ENCODE measurements at regions of chr9 and their contacts with region 1.

Region 1: DNA sequence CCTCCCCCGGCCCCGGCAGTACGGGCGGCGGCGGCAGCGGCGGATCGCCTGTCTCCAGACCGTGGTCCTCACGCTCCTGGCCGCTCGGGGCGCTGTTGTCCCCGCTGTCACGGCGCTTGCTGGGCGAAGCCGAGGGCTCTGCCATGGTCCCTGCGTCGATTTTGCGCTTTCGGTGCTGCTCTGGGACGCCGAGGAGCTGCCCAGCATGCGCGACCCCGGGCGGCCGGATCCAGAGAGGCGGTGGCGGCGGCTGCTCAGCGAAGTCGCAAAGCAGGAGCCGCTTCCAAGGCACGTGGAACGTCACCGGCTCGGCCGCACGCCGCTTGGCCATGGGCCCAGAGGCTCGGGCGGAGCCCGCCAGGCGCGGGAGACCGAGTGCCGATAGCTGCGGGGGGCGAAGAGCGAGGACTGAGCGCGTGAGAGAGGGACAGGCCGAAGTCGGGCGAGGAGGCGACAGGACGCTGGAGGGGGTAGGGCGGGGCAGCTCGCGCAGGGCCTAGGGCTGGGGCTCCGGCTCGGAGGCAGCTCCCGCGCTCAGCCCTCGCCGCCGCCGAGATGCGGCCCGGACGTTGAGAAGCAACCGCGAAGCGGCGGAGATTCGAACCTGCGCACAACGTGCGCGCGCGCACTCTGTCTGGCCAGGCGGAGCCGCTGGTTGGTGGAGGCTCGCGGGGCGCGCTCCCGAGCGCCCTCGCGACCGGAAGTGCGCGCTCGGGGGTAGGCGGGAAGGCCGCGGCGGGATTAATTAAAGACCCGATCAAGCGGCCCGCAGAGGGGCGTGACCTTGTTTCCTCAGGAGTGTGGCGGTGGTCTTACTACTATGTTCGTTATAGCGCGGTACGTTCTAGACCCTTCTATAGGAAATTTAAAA is at the start of gene C9orf40:
- DNase-seq: peak; percentile 88 to 90 (median 89)
- H3K4me3 ChIP-seq: peak within 1 kb of the TSS; percentile 66 to 96
- H3K4me3 Mint-ChIP-seq: peak within 1 kb of the TSS; percentile 96 to 100 (median 98)
- H3K27ac ChIP-seq: peak within 1 kb of the TSS; percentile 82
- H3K27ac Mint-ChIP-seq: peak within 1 kb of the TSS; percentile 93 to 98 (median 97)
- H3K4me1 ChIP-seq: peaks cover 23% of the 10 kb centered on the region
- H3K4me1 Mint-ChIP-seq: peaks cover 9 to 31% (median 23%) of the 10 kb centered on the region in 4 donors
- H3K27me3 ChIP-seq: no peaks in the 10 kb centered on the region
- H3K27me3 Mint-ChIP-seq: no peaks in the 10 kb centered on the region
- total RNA-seq, gene C9orf40: 7.1 to 7.4 TPM

Region 2: GRCh38 chr9:74887041-74887980 is 65.2 kb before region 1 on chr9 and contains the start of gene TRPM6:
- CTCF ChIA-PET with region 1: no interaction called
- POLR2A ChIA-PET with region 1: no interaction called
- intact Hi-C with region 1: loop called (anchors 10 kb)
- DNase-seq: peak in 4 of 5 donors; percentile 7 to 28 (median 17)
- H3K4me3 ChIP-seq: peak within 1 kb of the TSS; percentile 3 to 25
- H3K4me3 Mint-ChIP-seq: peak within 1 kb of the TSS; percentile 78 to 94 (median 84)
- H3K27ac ChIP-seq: no peak within 1 kb of the TSS
- H3K27ac Mint-ChIP-seq: peak within 1 kb of the TSS in 1 of 7 donors; percentile 19
- H3K4me1 ChIP-seq: peaks cover 6% of the 10 kb centered on the region
- H3K4me1 Mint-ChIP-seq: peaks cover 6 to 18% (median 16%) of the 10 kb centered on the region in 4 donors
- H3K27me3 ChIP-seq: peaks cover 15% of the 10 kb centered on the region
- H3K27me3 Mint-ChIP-seq: peaks cover 22 to 35% of the 10 kb centered on the region in 2 donors
- total RNA-seq, gene TRPM6: not detected

Region 3: GRCh38 chr9:74940600-74940999 is 11.9 kb before region 1 on chr9:
- CTCF ChIA-PET with region 1: interaction called, 14 read pairs
- POLR2A ChIA-PET with region 1: interaction called, 7 read pairs
- intact Hi-C with region 1: no loop called
- DNase-seq: no peak
- H3K4me3 ChIP-seq: no peak overlapping the region
- H3K4me3 Mint-ChIP-seq: no peak overlapping the region
- H3K27ac ChIP-seq: no peak overlapping the region
- H3K27ac Mint-ChIP-seq: no peak overlapping the region
- H3K4me1 ChIP-seq: no peaks in the 10 kb centered on the region
- H3K4me1 Mint-ChIP-seq: peaks cover 0 to 9% (median 7%) of the 10 kb centered on the region in 4 donors
- H3K27me3 ChIP-seq: no peaks in the 10 kb centered on the region
- H3K27me3 Mint-ChIP-seq: no peaks in the 10 kb centered on the region

Region 4: DNA sequence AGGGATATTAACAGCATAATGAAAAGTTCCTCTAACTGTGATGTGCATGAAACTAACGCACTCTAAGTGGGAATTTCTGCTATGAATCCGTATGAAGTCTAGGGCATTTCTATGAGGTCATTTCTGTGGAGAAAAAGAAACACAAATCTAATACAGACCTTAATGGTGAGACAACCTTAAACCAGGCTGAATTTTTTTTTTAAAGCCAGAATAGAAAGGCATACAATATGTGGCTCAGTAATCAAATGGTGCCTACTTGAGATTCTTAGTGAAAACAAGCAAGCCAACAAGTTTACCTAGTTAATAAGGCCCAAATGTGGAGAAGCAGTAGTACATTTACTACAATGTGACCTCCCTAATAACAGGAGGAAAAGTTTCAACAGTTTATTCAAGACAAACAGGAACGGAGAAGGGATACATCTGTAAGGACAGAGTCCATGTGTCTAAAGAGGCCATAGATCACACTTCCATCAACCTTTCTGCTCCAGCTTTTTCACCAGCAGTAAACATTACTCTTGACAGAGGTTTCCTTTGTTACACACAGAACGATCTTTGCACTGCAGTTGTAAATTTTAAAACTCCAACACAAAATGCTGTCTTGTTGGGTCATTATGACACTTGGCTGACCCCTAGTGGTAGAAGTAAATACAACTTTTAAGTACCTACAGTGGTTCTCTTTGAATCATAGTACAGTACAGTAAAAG is 49.4 kb after region 1 on chr9:
- CTCF ChIA-PET with region 1: interaction called, 18 read pairs
- POLR2A ChIA-PET with region 1: no interaction called
- intact Hi-C with region 1: loop called (anchors 2 kb)
- DNase-seq: peak in 4 of 5 donors; percentile 65 to 67 (median 66)
- H3K4me3 ChIP-seq: no peak overlapping the region
- H3K4me3 Mint-ChIP-seq: no peak overlapping the region
- H3K27ac ChIP-seq: no peak overlapping the region
- H3K27ac Mint-ChIP-seq: no peak overlapping the region
- H3K4me1 ChIP-seq: no peaks in the 10 kb centered on the region
- H3K4me1 Mint-ChIP-seq: peaks cover 0 to 7% (median 6%) of the 10 kb centered on the region in 4 donors
- H3K27me3 ChIP-seq: no peaks in the 10 kb centered on the region
- H3K27me3 Mint-ChIP-seq: no peaks in the 10 kb centered on the region

Region 5: DNA sequence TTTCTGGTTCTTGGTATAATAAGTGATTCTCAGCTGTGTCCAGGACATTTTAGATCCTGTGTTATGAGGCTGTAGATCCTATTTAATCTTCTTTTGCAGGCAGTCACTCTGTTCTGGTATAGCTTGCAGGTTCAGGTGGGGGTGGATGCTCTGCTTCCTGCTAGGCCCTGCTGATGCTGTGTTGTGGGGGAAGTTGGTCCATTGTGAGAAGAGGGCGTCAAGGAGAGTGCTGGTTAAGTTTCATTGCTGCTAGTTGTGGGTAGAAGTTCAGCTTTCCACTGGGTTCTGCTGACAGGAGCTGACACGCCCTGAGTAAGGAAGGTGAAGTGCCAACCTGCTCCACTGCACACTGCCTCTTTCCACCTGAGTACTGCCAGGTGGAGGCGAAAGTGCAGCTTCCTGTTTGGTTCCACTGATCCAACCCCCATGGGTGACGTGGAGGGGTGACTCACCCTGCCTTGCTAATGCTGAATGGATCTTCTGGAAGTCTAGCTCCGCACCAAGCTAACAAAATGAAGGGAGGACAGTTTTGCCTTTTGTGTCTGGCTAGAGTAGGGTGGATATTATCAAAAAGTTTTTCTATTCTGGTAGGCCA is 119.1 kb after region 1 on chr9:
- CTCF ChIA-PET with region 1: interaction called, 17 read pairs
- POLR2A ChIA-PET with region 1: interaction called, 3 read pairs
- intact Hi-C with region 1: loop called (anchors 2 kb)
- DNase-seq: peak; percentile 35 to 88 (median 42)
- H3K4me3 ChIP-seq: no peak overlapping the region
- H3K4me3 Mint-ChIP-seq: peak overlapping the region in 1 of 8 donors; percentile 23
- H3K27ac ChIP-seq: no peak overlapping the region
- H3K27ac Mint-ChIP-seq: peak overlapping the region; percentile 29 to 87 (median 57)
- H3K4me1 ChIP-seq: peaks cover 13% of the 10 kb centered on the region
- H3K4me1 Mint-ChIP-seq: peaks cover 12 to 30% (median 15%) of the 10 kb centered on the region in 4 donors
- H3K27me3 ChIP-seq: no peaks in the 10 kb centered on the region
- H3K27me3 Mint-ChIP-seq: no peaks in the 10 kb centered on the region

Measured in CD4-positive, alpha-beta memory T cell (primary cell).